ENCODE measurements at regions of chr3 and their contacts with region 1.

Region 1: GRCh38 chr3:50192689-50193141 is 1.3 kb downstream of the GNAT1 start:
- DNase-seq: peak in 4 of 5 donors; percentile 68 to 83 (median 78)
- H3K4me3 ChIP-seq: no peak overlapping the region
- H3K27ac ChIP-seq: no peak overlapping the region
- H3K4me1 ChIP-seq: peaks cover 3% of the 10 kb centered on the region
- H3K27me3 ChIP-seq: peaks cover 10% of the 10 kb centered on the region
- CTCF ChIP-seq: peak; percentile 77 to 85 (median 84)
- EP300 ChIP-seq: no peak
- POLR2A ChIP-seq: no peak

Region 2: GRCh38 chr3:50121416-50122032 is 71.2 kb before region 1 on chr3:
- intact Hi-C with region 1: loop called (anchors 2 kb)
- DNase-seq: peak; percentile 72 to 85 (median 80)
- H3K4me3 ChIP-seq: no peak overlapping the region
- H3K27ac ChIP-seq: no peak overlapping the region
- H3K4me1 ChIP-seq: peaks cover 9% of the 10 kb centered on the region
- H3K27me3 ChIP-seq: no peaks in the 10 kb centered on the region
- CTCF ChIP-seq: peak; percentile 69 to 74 (median 72)
- EP300 ChIP-seq: no peak
- POLR2A ChIP-seq: no peak

Region 3: DNA sequence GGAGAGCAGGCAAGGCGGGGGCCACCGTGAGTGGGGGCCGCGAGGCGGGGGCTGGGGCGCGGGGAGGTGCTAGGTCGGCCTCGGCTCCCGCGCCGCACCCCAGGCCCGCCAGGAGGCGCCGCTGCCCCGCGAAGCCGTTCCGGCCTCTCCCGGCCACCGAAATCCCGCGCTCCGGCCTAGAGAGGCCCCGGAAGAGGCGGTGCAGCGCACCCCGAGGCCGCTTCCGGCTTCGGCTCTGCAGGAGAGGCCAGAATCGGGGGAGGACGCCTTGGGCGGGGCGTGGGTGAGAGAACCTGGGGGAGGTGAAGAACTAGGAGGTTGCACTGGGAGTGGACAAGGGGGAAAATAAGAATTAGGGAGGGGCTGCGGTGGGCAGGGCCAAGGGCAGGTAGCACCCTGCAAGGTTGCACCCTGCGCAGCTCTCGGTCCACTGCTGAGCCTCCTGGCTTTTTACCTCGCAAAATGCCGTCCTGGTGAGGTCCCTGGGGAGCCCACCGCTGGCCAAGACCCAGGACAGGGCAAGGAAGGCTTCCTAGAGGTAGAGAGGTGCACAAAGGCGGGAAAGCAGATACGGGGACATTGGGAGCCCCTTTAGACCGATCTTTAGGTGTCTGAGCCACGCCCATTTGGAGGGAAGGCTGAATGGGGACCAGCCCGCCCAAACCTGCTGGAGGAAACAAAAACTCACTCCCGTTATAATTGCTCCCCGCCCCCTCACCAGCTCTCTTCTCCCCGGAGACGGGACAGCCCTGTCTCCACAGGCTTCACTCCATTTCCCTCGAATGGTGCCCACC is 34.9 kb after region 1 on chr3:
- intact Hi-C with region 1: loop called (anchors 1 to 2 kb)
- DNase-seq: peak; percentile 91 to 95 (median 93)
- H3K4me3 ChIP-seq: peak overlapping the region; percentile 70
- H3K27ac ChIP-seq: peak overlapping the region in 1 of 2 donors; percentile 18
- H3K4me1 ChIP-seq: peaks cover 8% of the 10 kb centered on the region
- H3K27me3 ChIP-seq: no peaks in the 10 kb centered on the region
- CTCF ChIP-seq: peak; percentile 82 to 95 (median 94)
- EP300 ChIP-seq: no peak
- POLR2A ChIP-seq: no peak

Region 4: GRCh38 chr3:50260027-50260941 is 67.6 kb after region 1 on chr3:
- intact Hi-C with region 1: no loop called
- DNase-seq: peak; percentile 93 to 97 (median 96)
- H3K4me3 ChIP-seq: peak overlapping the region; percentile 60
- H3K27ac ChIP-seq: peak overlapping the region; percentile 97 to 99
- H3K4me1 ChIP-seq: peaks cover 22% of the 10 kb centered on the region
- H3K27me3 ChIP-seq: no peaks in the 10 kb centered on the region
- CTCF ChIP-seq: peak; percentile 99 to 100 (median 100)
- EP300 ChIP-seq: no peak
- POLR2A ChIP-seq: peak; percentile 92

Region 5: DNA sequence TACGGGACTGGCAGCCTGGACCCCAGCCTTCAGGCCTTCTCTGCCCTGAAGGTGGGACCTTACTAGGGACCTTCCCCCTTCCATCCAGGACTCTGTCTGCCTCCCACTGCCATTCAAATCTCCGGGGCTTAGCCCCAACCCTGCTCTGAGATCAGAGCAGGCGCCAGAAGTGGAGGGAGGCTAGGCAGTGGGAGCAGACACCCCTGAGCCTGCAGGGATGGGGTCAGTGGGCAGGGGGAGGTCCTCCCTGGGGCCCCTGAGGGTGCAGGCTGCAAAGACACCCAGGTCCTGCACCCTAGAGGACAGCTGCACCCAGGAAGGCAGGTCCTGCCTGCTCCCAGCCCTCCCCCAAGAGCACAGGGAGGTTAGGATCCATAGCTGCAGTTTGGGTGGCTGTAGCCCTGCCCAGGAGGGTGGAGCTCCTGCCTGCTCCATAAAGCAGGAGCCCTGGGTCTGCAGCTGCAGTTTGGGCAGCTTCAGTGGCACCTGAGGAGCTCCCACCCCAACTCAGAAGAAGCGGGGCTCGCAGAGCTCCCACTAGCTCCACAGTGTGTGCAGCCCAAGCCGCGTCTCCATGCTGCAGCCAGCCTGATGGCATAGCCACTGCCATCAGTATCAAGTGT is 1969.6 kb after region 1 on chr3:
- intact Hi-C with region 1: loop called in 1 of 4 experiments (anchors 5 kb)
- DNase-seq: no peak
- H3K4me3 ChIP-seq: no peak overlapping the region
- H3K27ac ChIP-seq: no peak overlapping the region
- H3K4me1 ChIP-seq: no peaks in the 10 kb centered on the region
- H3K27me3 ChIP-seq: no peaks in the 10 kb centered on the region
- CTCF ChIP-seq: no peak
- EP300 ChIP-seq: no peak
- POLR2A ChIP-seq: no peak

Measured in ovary (tissue), 10 donors.